Panc1 (cell line): ENCODE measurements at regions of chr11 and their contacts with region 1.

Region 1: DNA sequence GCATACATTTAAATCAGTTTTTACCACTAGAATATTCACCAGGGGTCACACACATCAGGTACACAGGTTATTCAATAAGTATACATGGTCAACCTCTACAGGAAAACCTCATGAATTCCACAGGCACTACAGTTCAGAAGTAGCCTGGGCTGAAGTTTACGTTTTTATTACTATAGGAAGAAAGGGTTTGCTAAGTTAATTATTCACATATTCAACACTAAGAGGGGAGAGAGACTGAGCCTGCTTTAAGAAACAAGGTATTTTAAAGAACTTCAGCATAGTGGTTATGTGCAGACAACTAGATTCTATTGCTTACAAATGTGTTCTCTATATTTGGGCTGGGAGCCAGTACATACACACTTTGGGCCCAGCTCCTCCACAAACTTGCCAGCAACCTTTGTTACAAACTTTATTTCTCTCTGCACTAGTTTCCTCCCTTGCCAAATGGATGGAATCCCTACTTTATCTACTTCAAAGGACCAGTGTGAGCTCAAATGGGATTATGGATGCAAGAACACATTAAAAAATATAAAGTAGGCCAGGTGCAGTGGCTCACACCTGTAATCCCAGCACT is 31.9 kb downstream of the IL18BP start:
- DNase-seq: no peak
- ATAC-seq: no peak
- H3K4me3 ChIP-seq: no peak overlapping the region
- H3K27ac ChIP-seq: no peak overlapping the region
- H3K4me1 ChIP-seq: 0 out of 2 replicates have a peak, but pooled peaks cover 2% of the 10 kb centered on the region
- H3K27me3 ChIP-seq: no peaks in the 10 kb centered on the region
- CTCF ChIP-seq: no peak

Region 2: DNA sequence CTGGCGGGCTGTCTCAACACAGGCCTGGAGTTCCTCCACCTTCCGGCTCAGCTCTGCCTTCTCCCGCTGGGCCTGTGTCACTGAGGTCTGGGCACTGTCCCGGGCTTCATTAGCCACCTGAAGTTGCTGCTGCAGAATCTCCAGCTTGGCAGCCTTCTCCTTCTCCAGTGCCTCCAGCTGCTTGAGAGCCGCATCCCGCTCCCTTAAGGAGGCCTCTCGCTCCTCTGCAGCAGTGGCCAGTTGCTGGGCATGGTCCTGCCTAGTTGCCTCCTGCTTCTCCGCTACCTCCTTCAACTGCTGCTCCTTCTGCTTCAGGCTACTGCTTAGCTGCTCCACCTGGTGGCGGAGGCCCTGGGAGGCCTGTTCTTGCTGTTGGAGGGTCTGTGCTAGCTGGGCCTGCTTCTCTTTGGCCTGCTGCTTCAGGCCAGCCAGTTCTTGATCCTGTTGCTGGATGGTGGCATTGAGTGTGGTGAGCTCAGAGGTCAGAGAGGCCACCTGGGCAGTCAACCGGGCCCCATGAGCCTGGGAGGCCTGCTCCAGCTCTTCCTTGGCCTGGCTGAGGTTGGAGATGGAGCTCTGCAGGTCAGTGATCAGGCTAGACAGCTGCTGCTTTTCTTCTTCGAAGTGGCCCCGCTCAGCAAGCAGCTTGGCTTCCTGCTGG is 14.9 kb before region 1 on chr11:
- CTCF ChIA-PET with region 1: interaction called, 10 read pairs
- POLR2A ChIA-PET with region 1: no interaction called
- in situ Hi-C with region 1: no loop called
- intact Hi-C with region 1: no loop called
- DNase-seq: no peak
- ATAC-seq: peak; percentile 48; the same call in 1 of the 2 replicates
- H3K4me3 ChIP-seq: no peak overlapping the region
- H3K27ac ChIP-seq: no peak overlapping the region
- H3K4me1 ChIP-seq: no peaks in the 10 kb centered on the region
- H3K27me3 ChIP-seq: no peaks in the 10 kb centered on the region
- CTCF ChIP-seq: peak; percentile 44; the same call in 1 of the 2 replicates

Region 3: DNA sequence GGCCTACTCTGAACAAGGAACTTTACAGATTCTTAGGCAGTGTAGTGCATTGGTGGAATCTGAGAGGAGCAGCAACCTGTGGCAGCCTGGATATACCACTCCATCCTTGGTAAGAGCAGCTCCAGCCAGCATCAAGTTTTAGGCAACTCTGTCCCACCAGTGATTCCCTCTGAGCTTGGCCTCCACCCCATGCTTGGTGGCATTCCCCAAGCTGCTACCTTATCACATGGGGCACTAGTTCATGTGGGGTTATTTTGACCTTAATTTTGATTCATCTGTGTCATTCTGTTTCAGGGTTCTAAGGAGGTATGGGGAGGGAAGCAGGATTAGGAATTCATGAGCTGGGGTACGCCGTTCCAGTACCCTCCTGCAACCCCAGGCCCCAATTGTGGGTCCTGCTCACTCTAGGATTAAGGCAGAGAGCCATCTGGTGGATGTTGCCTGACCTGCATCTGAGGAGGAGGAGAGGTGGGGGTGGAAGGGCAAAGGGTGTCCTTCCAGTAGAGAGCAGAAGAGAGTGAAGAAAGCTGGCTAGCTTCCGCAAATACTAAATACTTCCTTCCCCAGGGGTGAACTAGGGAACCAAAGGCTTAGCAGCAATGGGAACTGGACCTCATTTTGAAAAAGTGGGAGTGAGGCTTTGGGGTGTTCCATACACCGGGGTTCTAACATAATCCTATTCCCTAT is 60.6 kb after region 1 on chr11:
- CTCF ChIA-PET with region 1: interaction called, 25 read pairs
- POLR2A ChIA-PET with region 1: no interaction called
- in situ Hi-C with region 1: no loop called
- intact Hi-C with region 1: loop called (anchors 2 kb)
- DNase-seq: no peak
- ATAC-seq: peak; percentile 92
- H3K4me3 ChIP-seq: no peak overlapping the region
- H3K27ac ChIP-seq: no peak overlapping the region
- H3K4me1 ChIP-seq: no peaks in the 10 kb centered on the region
- H3K27me3 ChIP-seq: no peaks in the 10 kb centered on the region
- CTCF ChIP-seq: peak; percentile 92

Region 4: DNA sequence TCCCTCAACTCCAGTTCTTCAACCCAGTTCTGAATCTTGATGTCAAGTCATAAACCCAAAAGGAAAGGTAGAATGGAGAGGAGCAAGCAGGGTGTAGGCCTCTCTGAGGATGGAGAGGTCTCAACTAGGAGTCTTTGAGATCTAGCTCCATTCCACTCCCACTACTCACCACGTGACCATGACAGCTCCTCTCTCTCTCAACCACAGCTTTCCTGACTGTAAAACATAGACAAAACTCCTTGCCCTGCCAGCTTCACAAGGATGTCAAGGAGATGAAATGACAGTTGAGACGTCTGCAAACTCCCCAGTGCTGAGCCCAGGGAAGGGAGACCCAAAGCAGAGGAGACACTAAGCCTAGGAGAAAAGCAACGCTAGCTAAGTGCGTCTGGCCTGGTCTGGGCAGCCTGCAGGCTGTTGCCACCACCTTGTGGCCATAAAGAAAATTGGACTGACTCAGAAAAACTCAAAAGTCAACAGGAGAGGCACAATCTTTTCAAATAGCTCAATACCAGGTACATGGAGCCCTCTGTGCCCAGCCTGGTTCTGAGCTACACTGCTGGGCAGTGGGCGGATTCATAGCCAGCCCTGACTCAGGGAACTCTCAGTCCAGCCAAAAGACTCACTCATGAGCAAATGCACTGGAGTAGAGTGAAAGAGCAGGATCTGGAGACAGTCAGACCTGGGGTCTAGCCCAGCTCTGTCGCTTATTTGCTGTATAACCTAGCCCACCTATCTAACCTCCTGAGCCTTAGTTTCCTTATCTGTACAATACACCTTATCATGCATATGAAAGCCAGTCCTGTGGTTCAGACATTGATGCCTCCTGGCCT is 400.4 kb after region 1 on chr11:
- CTCF ChIA-PET with region 1: interaction called, 3 read pairs
- POLR2A ChIA-PET with region 1: no interaction called
- in situ Hi-C with region 1: no loop called
- intact Hi-C with region 1: loop called (anchors 5 kb)
- DNase-seq: no peak
- ATAC-seq: 0 out of 2 replicates have a peak, but pooled peaks have one; percentile 36
- H3K4me3 ChIP-seq: no peak overlapping the region
- H3K27ac ChIP-seq: no peak overlapping the region
- H3K4me1 ChIP-seq: peaks cover 5% of the 10 kb centered on the region
- H3K27me3 ChIP-seq: no peaks in the 10 kb centered on the region
- CTCF ChIP-seq: peak; percentile 93

Region 5: DNA sequence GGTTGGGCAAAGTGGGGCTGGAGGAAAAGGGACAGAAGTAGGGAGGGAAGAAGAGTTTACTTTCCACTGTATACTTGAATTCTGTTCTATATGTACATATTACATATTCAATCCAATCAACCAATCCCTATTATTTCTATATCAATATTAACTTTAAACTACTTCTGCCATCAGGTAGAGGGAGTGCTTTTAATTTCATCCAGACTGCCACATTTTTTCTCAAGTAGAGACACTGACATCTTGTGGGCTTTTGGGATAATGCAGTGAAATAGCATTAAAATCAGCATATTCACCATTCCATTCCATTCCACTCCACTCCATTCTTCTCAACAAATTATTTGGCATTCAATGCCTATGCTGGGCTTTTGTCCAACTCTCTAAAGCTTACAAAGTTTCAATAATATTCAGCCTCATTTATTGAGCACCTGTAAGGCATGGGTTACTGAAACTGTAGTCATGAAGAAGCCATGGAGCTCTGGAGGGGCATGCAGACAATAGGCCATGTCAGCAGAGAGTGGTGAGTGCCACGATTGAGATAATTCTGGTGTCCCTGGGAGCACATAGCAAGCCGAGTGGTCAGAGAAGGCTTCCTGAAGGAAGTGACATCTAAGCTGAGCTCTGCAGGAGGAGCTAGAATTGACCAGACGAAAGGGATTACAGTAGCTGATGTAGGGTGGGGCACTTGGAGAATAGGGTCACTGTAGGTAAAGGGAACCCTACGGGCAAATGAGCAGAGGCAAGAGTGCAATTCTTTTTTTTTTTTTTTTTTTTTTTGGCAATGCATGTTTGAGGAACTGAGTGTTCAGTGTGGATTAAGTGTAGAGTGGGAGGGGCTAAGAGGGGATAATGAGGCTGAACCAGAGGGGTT is 416.6 kb after region 1 on chr11:
- CTCF ChIA-PET with region 1: interaction called, 21 read pairs
- POLR2A ChIA-PET with region 1: no interaction called
- in situ Hi-C with region 1: no loop called
- intact Hi-C with region 1: loop called (anchors 5 kb)
- DNase-seq: peak; percentile 46
- ATAC-seq: peak; percentile 84
- H3K4me3 ChIP-seq: no peak overlapping the region
- H3K27ac ChIP-seq: no peak overlapping the region
- H3K4me1 ChIP-seq: no peaks in the 10 kb centered on the region
- H3K27me3 ChIP-seq: peaks cover 4% of the 10 kb centered on the region
- CTCF ChIP-seq: peak; percentile 87

Region 6: GRCh38 chr11:72478659-72479058 is 448.1 kb after region 1 on chr11:
- CTCF ChIA-PET with region 1: no interaction called
- POLR2A ChIA-PET with region 1: no interaction called
- in situ Hi-C with region 1: no loop called
- intact Hi-C with region 1: no loop called
- DNase-seq: no peak
- ATAC-seq: no peak
- H3K4me3 ChIP-seq: no peak overlapping the region
- H3K27ac ChIP-seq: no peak overlapping the region
- H3K4me1 ChIP-seq: no peaks in the 10 kb centered on the region
- H3K27me3 ChIP-seq: peaks cover 3% of the 10 kb centered on the region
- CTCF ChIP-seq: no peak